ENCODE measurements at regions of chr12 and their contacts with region 1.

Region 1: GRCh38 chr12:124917135-124917840 is 2.8 kb upstream of the UBC start:
- DNase-seq: peak; percentile 96 to 99
- ATAC-seq: peak; percentile 71 to 81 (median 75)
- H3K4me3 ChIP-seq: peak overlapping the region; percentile 94
- H3K27ac ChIP-seq: peak overlapping the region; percentile 100
- H3K4me1 ChIP-seq: peaks cover 41% of the 10 kb centered on the region
- H3K27me3 ChIP-seq: no peaks in the 10 kb centered on the region
- CTCF ChIP-seq: no peak

Region 2: DNA sequence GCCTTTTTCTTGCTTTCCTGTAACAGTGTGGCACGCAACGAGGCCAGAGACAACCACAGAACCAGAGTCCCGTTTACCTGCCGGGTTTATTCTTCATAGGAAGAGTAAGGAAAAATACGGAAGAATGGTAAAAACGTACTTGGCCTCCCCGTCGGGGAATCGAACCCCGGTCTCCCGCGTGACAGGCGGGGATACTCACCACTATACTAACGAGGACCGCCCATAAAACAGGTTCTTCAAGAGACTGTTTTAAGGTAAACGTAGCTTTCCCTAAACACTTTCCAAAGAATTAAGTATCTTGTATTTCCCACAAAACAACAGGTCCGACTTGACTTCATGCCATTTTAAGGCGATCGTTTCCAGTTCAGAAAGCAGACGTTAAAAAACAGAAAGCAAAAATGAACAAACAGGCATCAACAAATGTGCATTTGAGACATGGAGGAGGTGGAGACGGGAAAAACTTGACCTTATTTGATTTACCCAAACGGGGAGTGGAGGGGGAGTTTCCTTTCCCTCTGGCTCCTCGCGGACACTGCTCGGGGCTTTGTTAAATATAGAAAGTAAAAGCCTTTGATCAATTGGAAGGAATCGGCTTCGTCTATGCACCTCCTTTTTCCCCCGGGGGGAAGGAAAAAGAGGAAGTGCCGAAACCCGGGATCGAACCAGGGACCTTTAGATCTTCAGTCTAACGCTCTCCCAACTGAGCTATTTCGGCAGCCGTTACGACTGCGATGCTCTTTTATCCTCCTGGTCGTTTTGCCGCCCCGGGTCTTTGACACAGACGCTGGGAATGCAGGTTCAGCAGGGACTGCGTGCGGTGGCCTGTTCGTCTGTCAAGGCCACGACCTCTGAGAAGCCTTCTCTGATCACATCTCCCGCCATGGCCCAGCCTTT is 10.2 kb after region 1 on chr12:
- intact Hi-C with region 1: loop called in 1 of 2 experiments (anchors 1 kb)
- DNase-seq: peak; percentile 85 to 94
- ATAC-seq: peak; percentile 85 to 91 (median 86)
- H3K4me3 ChIP-seq: peak overlapping the region; percentile 93
- H3K27ac ChIP-seq: peak overlapping the region; percentile 99
- H3K4me1 ChIP-seq: peaks cover 9% of the 10 kb centered on the region
- H3K27me3 ChIP-seq: no peaks in the 10 kb centered on the region
- CTCF ChIP-seq: no peak